ENCODE measurements at regions of chr2 and their contacts with region 1.

Region 1: GRCh38 chr2:13056259-13056843 is 339.6 kb downstream of the TRIB2 start:
- DNase-seq: peak; percentile 42
- H3K4me3 Mint-ChIP-seq: no peak overlapping the region
- H3K27ac Mint-ChIP-seq: no peak overlapping the region
- H3K4me1 Mint-ChIP-seq: no peaks in the 10 kb centered on the region
- H3K27me3 Mint-ChIP-seq: no peaks in the 10 kb centered on the region
- CTCF ChIP-seq: peak; percentile 29

Region 2: DNA sequence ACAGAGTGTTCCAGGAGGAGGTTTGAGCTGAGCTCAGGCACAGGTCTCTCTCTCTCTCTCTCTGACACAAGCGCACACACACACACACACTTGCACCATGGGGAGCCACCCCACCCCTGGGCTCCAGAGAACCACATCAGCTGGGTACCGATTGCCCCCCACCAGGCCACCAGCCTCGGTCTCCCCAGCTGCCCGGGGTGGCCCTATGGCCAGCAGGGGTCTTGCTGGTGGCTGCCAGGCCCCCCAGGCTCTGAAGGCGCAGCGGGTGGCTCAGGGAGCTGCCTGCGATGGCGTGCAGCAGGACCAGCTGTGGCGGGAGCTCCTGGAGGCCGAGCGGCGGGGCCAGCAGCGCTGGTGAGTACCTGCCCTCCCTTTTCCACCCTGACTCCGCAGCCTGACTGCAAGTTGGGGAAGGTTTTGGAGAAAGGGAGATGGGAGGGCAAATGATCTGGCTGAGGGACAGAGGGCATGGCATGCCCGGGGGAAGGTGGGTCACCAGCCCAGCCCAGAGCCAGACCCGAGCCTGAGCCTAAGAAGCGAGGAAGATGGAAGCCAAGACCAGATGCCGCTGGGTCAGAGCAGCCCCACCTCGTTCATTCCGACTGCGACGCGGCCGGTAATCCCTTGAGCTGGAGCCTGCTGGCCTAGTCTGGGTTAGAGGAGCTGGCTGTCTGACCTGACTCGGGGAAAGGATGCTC is 1923.0 kb before region 1 on chr2:
- CTCF ChIA-PET with region 1: no interaction called
- POLR2A ChIA-PET with region 1: no interaction called
- intact Hi-C with region 1: no loop called
- DNase-seq: no peak
- H3K4me3 Mint-ChIP-seq: peak overlapping the region; percentile 76
- H3K27ac Mint-ChIP-seq: peak overlapping the region; percentile 94
- H3K4me1 Mint-ChIP-seq: peaks cover 12% of the 10 kb centered on the region
- H3K27me3 Mint-ChIP-seq: peaks cover 17% of the 10 kb centered on the region
- CTCF ChIP-seq: no peak

Region 3: DNA sequence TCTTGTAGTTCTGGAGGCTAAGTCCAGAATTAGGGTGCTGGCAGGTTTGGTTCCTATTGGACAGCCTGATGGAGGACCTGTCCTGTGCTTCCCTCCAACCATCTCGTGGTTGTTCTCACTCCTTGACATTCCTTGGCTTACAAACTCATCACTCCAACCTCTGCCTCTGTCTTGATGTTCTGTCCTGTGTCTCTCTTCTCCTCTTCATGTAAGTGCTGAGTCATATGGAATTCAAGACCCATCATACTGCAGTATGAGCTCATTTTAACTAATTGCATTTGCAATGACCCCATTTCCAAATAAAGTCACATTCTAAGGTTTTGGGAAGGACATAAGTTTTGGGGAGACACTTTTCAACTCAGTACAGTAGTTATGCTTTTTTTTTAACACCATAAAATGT is 35.1 kb after region 1 on chr2:
- CTCF ChIA-PET with region 1: no interaction called
- POLR2A ChIA-PET with region 1: no interaction called
- intact Hi-C with region 1: no loop called
- DNase-seq: no peak
- H3K4me3 Mint-ChIP-seq: no peak overlapping the region
- H3K27ac Mint-ChIP-seq: no peak overlapping the region
- H3K4me1 Mint-ChIP-seq: no peaks in the 10 kb centered on the region
- H3K27me3 Mint-ChIP-seq: no peaks in the 10 kb centered on the region
- CTCF ChIP-seq: no peak

Region 4: DNA sequence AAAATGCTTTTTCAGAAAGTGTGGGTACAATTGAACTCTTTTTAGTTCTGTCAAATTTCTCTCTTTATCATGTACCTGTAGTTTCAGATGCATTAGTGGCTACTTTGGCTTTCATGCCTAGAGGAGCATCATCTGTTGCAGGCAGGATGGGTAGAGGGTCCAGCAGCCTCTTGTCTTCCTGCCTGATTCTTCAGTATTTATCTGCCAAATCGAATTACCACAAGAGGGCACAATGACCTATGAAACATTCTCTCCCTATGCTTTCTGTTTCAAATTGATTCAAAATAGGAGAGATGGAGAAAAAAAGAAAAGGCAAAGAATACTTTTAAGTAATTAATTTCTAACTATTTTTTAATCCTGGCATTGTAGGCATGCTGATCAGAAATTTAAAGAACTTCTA is 137.5 kb after region 1 on chr2:
- CTCF ChIA-PET with region 1: interaction called, 4 read pairs
- POLR2A ChIA-PET with region 1: no interaction called
- intact Hi-C with region 1: loop called (anchors 1 kb)
- DNase-seq: peak; percentile 55
- H3K4me3 Mint-ChIP-seq: no peak overlapping the region
- H3K27ac Mint-ChIP-seq: no peak overlapping the region
- H3K4me1 Mint-ChIP-seq: peaks cover 9% of the 10 kb centered on the region
- H3K27me3 Mint-ChIP-seq: no peaks in the 10 kb centered on the region
- CTCF ChIP-seq: peak; percentile 58

Region 5: DNA sequence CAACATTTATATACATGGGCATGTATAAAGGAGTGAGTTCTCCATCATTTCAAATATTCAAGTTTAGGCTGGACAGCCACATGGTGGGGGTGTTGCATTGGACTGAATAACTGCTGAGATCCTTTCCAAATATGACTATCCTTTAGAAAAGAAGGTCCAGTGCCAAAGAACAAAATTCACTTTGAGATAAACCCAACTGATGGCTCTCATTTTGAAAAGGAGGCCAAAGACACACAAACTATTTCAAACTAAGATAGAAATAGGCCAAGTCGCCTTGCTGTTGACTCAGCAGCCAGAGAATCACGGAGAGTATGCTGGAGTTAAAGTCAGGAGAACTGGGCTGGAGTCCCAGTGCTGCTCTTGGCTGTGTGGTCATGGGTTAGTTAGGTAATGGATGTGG is 1371.7 kb after region 1 on chr2:
- CTCF ChIA-PET with region 1: no interaction called
- POLR2A ChIA-PET with region 1: no interaction called
- intact Hi-C with region 1: loop called (anchors 10 kb)
- DNase-seq: peak; percentile 46
- H3K4me3 Mint-ChIP-seq: no peak overlapping the region
- H3K27ac Mint-ChIP-seq: no peak overlapping the region
- H3K4me1 Mint-ChIP-seq: no peaks in the 10 kb centered on the region
- H3K27me3 Mint-ChIP-seq: no peaks in the 10 kb centered on the region
- CTCF ChIP-seq: no peak

Region 6: DNA sequence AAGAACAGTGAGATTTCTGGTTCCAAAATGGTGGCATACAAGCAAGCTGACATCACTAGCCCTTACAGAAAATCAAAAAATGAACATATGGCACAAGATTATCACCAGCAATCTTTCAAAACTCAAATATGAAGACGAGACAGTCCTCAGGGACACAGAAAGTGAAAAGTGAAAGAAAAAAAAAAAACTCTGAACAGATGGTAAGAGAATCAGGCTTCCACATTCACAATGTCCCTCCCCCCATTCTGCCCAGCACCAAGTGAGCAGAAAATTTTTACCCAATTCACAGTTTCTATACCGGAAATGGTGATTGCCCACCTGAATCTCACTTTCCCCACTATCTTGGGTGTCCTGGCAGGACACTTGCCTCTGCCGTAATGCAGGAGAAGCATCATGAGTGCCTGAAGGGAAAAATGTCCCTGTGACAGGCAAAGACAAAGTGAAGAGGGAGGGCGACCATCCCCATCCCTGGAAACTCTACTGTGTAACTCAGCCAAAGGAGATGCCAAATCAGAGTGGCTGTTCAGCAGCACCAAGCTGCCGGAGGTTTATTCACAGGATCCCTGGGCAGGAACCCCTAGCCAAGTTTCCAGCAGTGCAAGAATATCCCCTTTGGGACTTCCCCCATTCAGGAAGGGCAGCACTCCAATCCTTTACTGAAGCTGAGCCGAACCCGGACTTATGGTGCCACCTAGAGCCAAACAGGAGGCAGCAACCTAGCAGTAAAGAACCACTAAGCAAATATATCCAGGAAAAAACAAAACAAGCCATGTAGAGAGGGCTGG is 1888.4 kb after region 1 on chr2:
- CTCF ChIA-PET with region 1: interaction called, 5 read pairs
- POLR2A ChIA-PET with region 1: no interaction called
- intact Hi-C with region 1: loop called (anchors 10 kb)
- DNase-seq: peak; percentile 69
- H3K4me3 Mint-ChIP-seq: no peak overlapping the region
- H3K27ac Mint-ChIP-seq: no peak overlapping the region
- H3K4me1 Mint-ChIP-seq: no peaks in the 10 kb centered on the region
- H3K27me3 Mint-ChIP-seq: no peaks in the 10 kb centered on the region
- CTCF ChIP-seq: peak; percentile 24

Measured in MCF 10A (cell line).